ENCODE measurements at regions of chr12 and their contacts with region 1.

Region 1: DNA sequence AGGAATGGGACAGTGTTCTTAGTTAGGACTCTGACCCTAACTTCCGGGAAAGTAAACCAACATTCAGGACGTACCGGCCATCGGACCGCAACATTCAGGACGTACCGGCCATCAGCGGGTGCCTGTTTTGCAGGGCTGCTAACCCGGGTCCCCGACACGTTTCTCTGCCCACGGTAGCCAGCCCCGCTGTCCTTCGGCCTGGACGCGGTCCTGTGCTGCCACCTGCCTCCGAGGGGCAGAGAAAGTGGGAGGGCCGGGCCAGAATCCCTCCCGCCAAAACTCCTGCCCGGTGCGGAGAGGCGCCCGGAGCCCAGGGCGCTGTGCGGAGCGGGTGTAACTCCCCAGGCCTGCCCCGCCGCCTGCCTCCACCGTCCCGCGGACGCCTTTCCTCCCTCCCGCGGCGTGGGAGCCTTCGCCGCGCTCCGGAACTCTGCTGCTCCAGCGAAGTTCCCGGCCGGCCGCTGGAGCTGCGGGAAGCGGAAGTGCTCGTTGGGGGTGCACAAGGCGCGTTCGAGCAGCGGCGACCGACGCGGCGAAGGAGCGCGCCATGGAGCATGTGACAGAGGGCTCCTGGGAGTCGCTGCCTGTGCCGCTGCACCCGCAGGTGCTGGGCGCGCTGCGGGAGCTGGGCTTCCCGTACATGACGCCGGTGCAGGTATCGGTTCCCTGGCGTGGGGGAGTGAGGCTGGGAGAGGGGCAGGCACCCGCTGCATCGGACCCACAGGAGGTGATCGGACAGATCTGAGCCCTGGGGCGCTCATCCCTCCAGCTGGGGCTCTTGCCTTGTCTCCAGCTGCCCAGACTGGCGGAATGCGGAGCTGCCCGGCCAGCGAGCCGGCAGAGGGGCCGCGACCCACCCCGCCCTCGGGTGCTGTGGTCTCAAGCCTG is at the start of gene DDX55:
- DNase-seq: peak; percentile 92
- H3K4me3 ChIP-seq: peak within 1 kb of the TSS; percentile 95
- H3K27ac ChIP-seq: peak within 1 kb of the TSS; percentile 76
- H3K4me1 ChIP-seq: peaks cover 36% of the 10 kb centered on the region
- CTCF ChIP-seq: peak; percentile 53
- total RNA-seq, gene DDX55: 56.6 and 78.6 TPM in 2 replicates

Region 2: GRCh38 chr12:123271001-123271729 is 330.7 kb before region 1 on chr12:
- CTCF ChIA-PET with region 1: no interaction called
- POLR2A ChIA-PET with region 1: interaction called, 3 read pairs
- intact Hi-C with region 1: loop called (anchors 1 kb)
- DNase-seq: peak; percentile 83
- H3K4me3 ChIP-seq: peak overlapping the region; percentile 77
- H3K27ac ChIP-seq: no peak overlapping the region
- H3K4me1 ChIP-seq: peaks cover 21% of the 10 kb centered on the region
- CTCF ChIP-seq: no peak; the same call in 1 of the 2 replicates

Region 3: DNA sequence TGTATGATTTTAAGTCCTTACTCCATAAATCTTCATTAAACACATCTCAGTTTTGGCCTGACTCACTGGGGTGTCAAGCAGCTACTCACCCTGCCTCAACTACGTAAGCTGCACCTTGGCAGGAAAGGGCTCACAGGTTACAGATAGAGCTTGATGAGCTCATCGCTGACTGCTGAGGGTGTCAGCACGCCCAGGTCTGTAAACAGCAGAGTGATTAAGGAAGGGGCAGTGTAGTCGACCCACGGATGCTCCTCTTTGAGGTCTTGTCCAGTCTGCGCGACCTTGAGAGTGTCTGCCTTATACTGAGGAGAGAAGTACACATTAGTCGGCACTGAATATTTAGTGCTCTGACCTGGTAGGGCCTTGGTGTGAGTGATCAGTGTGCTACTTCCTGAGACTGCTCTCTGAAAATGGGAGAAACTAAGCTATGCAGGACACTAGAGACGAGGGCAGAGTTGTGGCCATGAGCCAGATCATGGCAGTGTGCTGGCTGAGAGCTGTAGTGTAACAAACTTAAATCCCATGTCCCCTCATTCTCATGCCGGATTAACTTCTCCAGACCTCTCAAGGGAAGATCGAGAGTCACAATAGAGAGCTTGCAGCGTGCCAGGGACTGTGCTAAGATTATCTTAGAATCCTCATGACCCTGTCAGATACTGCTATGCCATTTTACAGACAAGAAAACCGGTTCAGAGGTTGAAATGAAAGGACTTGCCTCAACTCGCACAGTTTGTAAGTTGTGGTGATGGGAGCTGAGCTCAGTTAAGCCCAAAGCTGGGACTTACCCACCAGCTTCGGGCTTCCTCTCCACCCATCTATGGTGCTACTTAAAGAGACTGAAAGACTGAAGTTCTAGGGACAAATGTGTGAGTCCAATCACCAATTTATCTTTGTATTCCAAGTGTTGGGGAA is 20.0 kb after region 1 on chr12:
- CTCF ChIA-PET with region 1: no interaction called
- POLR2A ChIA-PET with region 1: no interaction called
- intact Hi-C with region 1: no loop called
- DNase-seq: no peak
- H3K4me3 ChIP-seq: no peak overlapping the region
- H3K27ac ChIP-seq: no peak overlapping the region
- H3K4me1 ChIP-seq: no peaks in the 10 kb centered on the region
- CTCF ChIP-seq: no peak

Region 4: GRCh38 chr12:123633379-123634141 is 31.7 kb after region 1 on chr12 and contains the starts of genes EIF2B1 and GTF2H3:
- CTCF ChIA-PET with region 1: no interaction called
- POLR2A ChIA-PET with region 1: interaction called, 7 read pairs
- intact Hi-C with region 1: loop called (anchors 1 kb)
- DNase-seq: peak; percentile 97
- H3K4me3 ChIP-seq: peak within 1 kb of the TSS; percentile 98
- H3K27ac ChIP-seq: peak within 1 kb of the TSS; percentile 57
- H3K4me1 ChIP-seq: peaks cover 12% of the 10 kb centered on the region
- CTCF ChIP-seq: no peak
- total RNA-seq, gene EIF2B1: 60.3 and 93.4 TPM in 2 replicates
- total RNA-seq, gene GTF2H3: 14.3 and 18.1 TPM in 2 replicates

Measured in OCI-LY7 (cell line).